ENCODE measurements at regions of chr12 and their contacts with region 1.

Region 1: GRCh38 chr12:48995061-48995879 is 3.9 kb downstream of the DDN start:
- DNase-seq: peak; percentile 64
- ATAC-seq: peak; percentile 43
- H3K4me3 Mint-ChIP-seq: no peak overlapping the region
- H3K27ac Mint-ChIP-seq: no peak overlapping the region
- H3K4me1 Mint-ChIP-seq: peaks cover 36% of the 10 kb centered on the region
- H3K27me3 Mint-ChIP-seq: peaks cover 58% of the 10 kb centered on the region

Region 2: DNA sequence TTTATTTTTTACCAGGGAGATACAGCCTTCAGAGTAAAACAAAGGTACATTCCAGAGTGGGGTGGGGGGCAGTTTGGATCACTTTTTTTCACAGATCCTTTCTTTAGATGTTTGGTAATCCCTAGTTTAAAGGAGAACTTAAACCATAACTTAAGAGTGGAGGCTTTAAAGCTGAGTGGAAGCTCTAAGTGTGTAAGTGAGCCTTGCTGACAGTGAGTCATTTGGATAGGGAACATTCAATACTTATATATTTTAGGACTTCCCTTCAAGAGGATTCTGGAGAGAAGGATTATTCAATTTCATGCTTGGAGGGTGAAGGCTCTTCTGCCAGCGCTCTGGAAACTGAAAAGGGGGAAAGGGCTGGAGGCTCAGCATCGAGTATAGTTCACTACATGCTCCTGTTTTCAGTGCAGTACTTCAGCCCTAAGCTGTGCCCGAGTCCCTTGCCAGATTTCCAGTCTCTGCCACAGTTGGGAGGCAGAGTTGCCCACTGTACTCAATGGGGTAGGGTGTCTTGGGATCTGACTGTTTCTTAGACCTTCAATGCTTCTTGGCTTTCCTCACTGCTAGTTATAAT is 14.9 kb after region 1 on chr12:
- CTCF ChIA-PET with region 1: interaction called, 40 read pairs
- POLR2A ChIA-PET with region 1: interaction called, 3 read pairs
- DNase-seq: no peak
- ATAC-seq: no peak
- H3K4me3 Mint-ChIP-seq: no peak overlapping the region
- H3K27ac Mint-ChIP-seq: no peak overlapping the region
- H3K4me1 Mint-ChIP-seq: no peaks in the 10 kb centered on the region
- H3K27me3 Mint-ChIP-seq: no peaks in the 10 kb centered on the region

Region 3: GRCh38 chr12:49018261-49019119 is 23.2 kb after region 1 on chr12 and contains the start of gene PRKAG1:
- CTCF ChIA-PET with region 1: interaction called, 46 read pairs
- POLR2A ChIA-PET with region 1: interaction called, 6 read pairs
- DNase-seq: peak; percentile 97
- ATAC-seq: peak; percentile 93
- H3K4me3 Mint-ChIP-seq: peak within 1 kb of the TSS; percentile 92
- H3K27ac Mint-ChIP-seq: peak within 1 kb of the TSS; percentile 98
- H3K4me1 Mint-ChIP-seq: peaks cover 33% of the 10 kb centered on the region
- H3K27me3 Mint-ChIP-seq: no peaks in the 10 kb centered on the region
- total RNA-seq, gene PRKAG1: 57.5 to 59.8 TPM

Region 4: GRCh38 chr12:49043856-49044258 is 48.6 kb after region 1 on chr12:
- CTCF ChIA-PET with region 1: interaction called, 29 read pairs
- POLR2A ChIA-PET with region 1: no interaction called
- DNase-seq: peak; percentile 85
- ATAC-seq: peak; percentile 84
- H3K4me3 Mint-ChIP-seq: no peak overlapping the region
- H3K27ac Mint-ChIP-seq: peak overlapping the region; percentile 27
- H3K4me1 Mint-ChIP-seq: peaks cover 4% of the 10 kb centered on the region
- H3K27me3 Mint-ChIP-seq: no peaks in the 10 kb centered on the region

Region 5: DNA sequence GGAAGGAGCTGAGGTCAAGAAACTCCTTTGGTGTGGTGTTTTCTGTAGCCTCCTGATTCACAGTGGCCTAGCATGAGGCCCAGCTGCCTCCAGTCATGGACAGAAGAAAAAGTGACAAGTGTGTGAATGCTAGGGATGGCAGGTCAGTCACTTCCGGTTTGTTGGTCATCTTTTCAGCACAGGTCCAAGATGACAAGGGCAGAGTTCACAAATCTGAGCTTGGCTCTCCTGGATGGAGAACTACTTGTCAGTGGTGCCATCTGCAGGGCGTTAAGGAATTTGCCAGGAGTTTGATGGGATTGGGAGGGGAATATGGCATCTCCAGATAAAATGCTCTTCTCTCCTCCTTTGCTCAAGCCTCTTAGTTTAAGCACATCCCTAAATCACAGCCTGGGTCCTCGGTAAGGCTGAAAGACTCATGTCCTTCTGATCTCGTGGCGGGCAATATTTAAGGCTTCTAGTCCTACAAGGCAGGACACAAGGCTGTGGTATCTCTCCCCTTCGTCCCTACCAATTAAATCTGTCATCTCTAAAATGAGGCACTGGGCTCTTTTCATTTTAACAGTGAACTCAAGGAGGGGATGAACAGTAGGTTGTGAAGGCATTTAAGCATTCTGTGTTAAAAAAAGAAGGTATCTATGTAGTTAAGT is 125.9 kb after region 1 on chr12:
- CTCF ChIA-PET with region 1: no interaction called
- POLR2A ChIA-PET with region 1: no interaction called
- DNase-seq: no peak
- ATAC-seq: no peak
- H3K4me3 Mint-ChIP-seq: no peak overlapping the region
- H3K27ac Mint-ChIP-seq: no peak overlapping the region
- H3K4me1 Mint-ChIP-seq: peaks cover 2% of the 10 kb centered on the region
- H3K27me3 Mint-ChIP-seq: peaks cover 4% of the 10 kb centered on the region